Naive thymus-derived CD4-positive, alpha-beta T cell (primary cell): ENCODE measurements at regions of chr3 and their contacts with region 1.

Region 1: DNA sequence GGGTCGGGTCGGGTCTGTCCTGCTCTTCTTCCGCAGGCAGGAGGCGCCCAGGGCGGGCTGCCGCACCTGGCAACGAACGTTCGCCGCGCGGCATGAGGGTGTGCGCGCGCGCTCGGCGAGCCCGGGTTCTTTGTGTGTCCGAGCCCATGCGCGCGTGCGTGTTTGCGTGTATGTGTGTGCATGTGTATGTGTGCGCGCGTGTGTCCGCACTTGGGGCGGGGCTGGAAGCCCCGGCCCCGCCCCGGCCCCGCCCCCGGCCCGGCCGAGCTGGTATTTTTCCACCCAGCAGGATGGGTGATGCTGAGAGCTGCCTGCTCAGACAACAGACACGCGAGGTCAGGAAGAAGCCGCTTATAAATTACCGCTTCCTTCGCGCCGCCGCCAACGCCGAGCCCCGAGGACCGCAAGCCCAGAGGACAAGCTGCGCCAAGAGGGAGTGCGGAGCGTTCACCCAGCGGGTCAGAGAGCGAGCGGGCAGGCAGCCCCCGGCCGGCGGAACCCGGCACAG is at the start of gene SLC6A6:
- DNase-seq: peak; percentile 86 to 95 (median 92)
- ATAC-seq: peak; percentile 89
- H3K4me3 ChIP-seq: peak within 1 kb of the TSS; percentile 100
- H3K4me3 Mint-ChIP-seq: peak within 1 kb of the TSS; percentile 91 to 100 (median 98)
- H3K27ac ChIP-seq: peak within 1 kb of the TSS; percentile 83
- H3K27ac Mint-ChIP-seq: peak within 1 kb of the TSS; percentile 89 to 98 (median 96)
- H3K4me1 ChIP-seq: peaks cover 20 to 27% of the 10 kb centered on the region in 2 donors
- H3K4me1 Mint-ChIP-seq: peaks cover 33 to 50% (median 44%) of the 10 kb centered on the region in 7 donors
- H3K27me3 ChIP-seq: no peaks in the 10 kb centered on the region
- H3K27me3 Mint-ChIP-seq: peaks cover 0 to 1% (median 0%) of the 10 kb centered on the region in 5 donors
- total RNA-seq, gene SLC6A6: 34.5 to 87.5 (median 35.6) TPM

Region 2: GRCh38 chr3:14144423-14145075 is 257.8 kb before region 1 on chr3:
- CTCF ChIA-PET with region 1: no interaction called
- POLR2A ChIA-PET with region 1: no interaction called
- intact Hi-C with region 1: loop called (anchors 1 kb)
- DNase-seq: peak; percentile 45 to 93 (median 84)
- ATAC-seq: peak; percentile 75
- H3K4me3 ChIP-seq: peak overlapping the region; percentile 10
- H3K4me3 Mint-ChIP-seq: peak overlapping the region; percentile 53 to 76 (median 66)
- H3K27ac ChIP-seq: peak overlapping the region; percentile 79
- H3K27ac Mint-ChIP-seq: peak overlapping the region; percentile 89 to 100 (median 98)
- H3K4me1 ChIP-seq: peaks cover 50 to 52% of the 10 kb centered on the region in 2 donors
- H3K4me1 Mint-ChIP-seq: peaks cover 34 to 62% (median 56%) of the 10 kb centered on the region in 7 donors
- H3K27me3 ChIP-seq: no peaks in the 10 kb centered on the region
- H3K27me3 Mint-ChIP-seq: no peaks in the 10 kb centered on the region

Region 3: DNA sequence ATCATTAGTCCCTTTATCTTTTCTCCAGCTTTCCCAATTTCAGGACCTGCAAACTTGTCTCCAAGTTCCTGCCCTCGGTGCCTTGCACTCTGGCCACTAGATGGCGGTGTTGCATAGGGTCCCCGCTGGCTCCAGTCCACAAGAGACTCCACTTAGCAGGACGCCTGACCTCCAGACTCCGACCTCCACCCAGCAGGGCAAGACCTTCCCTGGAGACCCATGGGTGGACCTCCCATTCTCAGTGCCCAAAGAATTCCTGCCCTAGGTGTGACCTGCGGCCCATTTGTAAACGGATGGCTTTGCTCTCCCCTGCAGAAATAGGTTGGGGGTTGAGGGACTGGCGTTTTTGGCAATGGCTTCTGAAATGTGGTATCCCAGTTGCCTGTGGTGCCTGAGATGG is 141.1 kb before region 1 on chr3:
- CTCF ChIA-PET with region 1: interaction called, 4 read pairs
- POLR2A ChIA-PET with region 1: no interaction called
- intact Hi-C with region 1: loop called (anchors 1 kb)
- DNase-seq: peak; percentile 32 to 78 (median 62)
- ATAC-seq: peak; percentile 77
- H3K4me3 ChIP-seq: no peak overlapping the region
- H3K4me3 Mint-ChIP-seq: no peak overlapping the region
- H3K27ac ChIP-seq: no peak overlapping the region
- H3K27ac Mint-ChIP-seq: no peak overlapping the region
- H3K4me1 ChIP-seq: no peaks in the 10 kb centered on the region
- H3K4me1 Mint-ChIP-seq: no peaks in the 10 kb centered on the region
- H3K27me3 ChIP-seq: no peaks in the 10 kb centered on the region
- H3K27me3 Mint-ChIP-seq: peaks cover 0 to 14% (median 0%) of the 10 kb centered on the region in 5 donors

Region 4: DNA sequence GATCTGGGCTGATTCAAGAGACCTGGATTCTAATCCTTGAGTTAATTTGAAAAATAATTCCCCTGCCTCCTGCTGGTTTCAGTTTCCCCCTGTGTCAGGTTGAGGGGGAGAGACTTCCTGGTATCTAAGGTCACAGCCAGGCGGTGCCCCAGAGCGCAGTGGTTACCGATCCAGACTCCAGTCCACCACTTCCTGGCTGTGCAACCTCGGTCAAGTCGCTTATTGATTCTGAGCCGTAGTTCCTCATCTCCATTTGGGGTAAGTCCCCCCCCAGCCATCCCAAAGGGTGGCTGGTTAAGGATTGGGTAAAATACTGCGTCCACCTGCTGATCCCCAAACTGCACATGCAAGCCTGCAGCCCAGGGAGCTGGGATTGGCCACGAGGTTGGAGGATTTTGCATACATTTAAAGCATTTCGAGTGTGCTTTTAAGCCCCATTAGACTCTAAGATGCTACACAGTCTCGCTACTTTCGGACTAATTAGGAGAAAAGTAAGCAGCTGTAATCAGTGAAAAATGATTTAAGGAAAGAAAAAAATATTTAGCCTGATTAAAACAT is 23.8 kb after region 1 on chr3:
- CTCF ChIA-PET with region 1: interaction called, 10 read pairs
- POLR2A ChIA-PET with region 1: interaction called, 23 read pairs
- intact Hi-C with region 1: loop called in 1 of 2 experiments (anchors 1 kb)
- DNase-seq: peak in 7 of 9 donors; percentile 16 to 33 (median 29)
- ATAC-seq: peak; percentile 75
- H3K4me3 ChIP-seq: peak overlapping the region; percentile 24
- H3K4me3 Mint-ChIP-seq: peak overlapping the region; percentile 50 to 74 (median 69)
- H3K27ac ChIP-seq: peak overlapping the region; percentile 62
- H3K27ac Mint-ChIP-seq: peak overlapping the region; percentile 61 to 100 (median 87)
- H3K4me1 ChIP-seq: peaks cover 72 to 92% of the 10 kb centered on the region in 2 donors
- H3K4me1 Mint-ChIP-seq: peaks cover 76 to 89% (median 86%) of the 10 kb centered on the region in 7 donors
- H3K27me3 ChIP-seq: no peaks in the 10 kb centered on the region
- H3K27me3 Mint-ChIP-seq: no peaks in the 10 kb centered on the region

Region 5: DNA sequence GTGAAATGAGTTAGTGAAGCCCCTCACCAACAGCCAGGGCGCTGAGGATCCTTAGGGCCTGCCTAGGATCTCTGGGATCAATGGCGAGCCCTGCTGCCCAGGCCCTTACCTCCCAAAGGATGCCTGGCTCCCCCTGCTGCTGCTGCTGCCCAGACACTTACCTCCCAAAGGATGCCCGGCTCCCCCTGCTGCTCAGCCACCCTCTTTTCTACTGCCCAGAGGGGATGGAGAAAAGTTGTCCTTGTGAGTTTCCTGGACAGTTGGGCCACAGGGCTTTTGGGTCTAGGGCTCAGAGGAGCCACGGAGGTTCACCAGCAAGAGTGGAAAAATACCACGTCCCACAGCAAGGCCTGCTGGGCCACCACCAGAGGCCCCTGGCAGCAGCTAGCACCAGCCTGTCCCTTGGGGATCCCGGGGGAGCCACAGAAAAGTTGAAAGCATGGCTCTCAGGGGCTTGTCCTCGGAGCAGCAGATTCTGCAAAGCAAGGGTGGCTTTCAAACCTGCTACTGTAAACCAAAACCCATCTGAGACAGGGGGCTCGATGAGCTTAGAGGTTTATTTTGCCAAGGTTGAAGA is 59.5 kb after region 1 on chr3:
- CTCF ChIA-PET with region 1: interaction called, 19 read pairs
- POLR2A ChIA-PET with region 1: interaction called, 3 read pairs
- intact Hi-C with region 1: loop called (anchors 1 to 2 kb)
- DNase-seq: peak in 6 of 9 donors; percentile 22 to 41 (median 32)
- ATAC-seq: peak; percentile 60
- H3K4me3 ChIP-seq: no peak overlapping the region
- H3K4me3 Mint-ChIP-seq: no peak overlapping the region
- H3K27ac ChIP-seq: peak overlapping the region; percentile 5
- H3K27ac Mint-ChIP-seq: peak overlapping the region in 1 of 9 donors; percentile 10
- H3K4me1 ChIP-seq: no peaks in the 10 kb centered on the region
- H3K4me1 Mint-ChIP-seq: peaks cover 0 to 20% (median 5%) of the 10 kb centered on the region in 7 donors
- H3K27me3 ChIP-seq: no peaks in the 10 kb centered on the region
- H3K27me3 Mint-ChIP-seq: no peaks in the 10 kb centered on the region

Region 6: GRCh38 chr3:14651440-14652251 is 249.3 kb after region 1 on chr3 and contains the start of gene CCDC174:
- CTCF ChIA-PET with region 1: no interaction called
- POLR2A ChIA-PET with region 1: interaction called, 4 read pairs
- intact Hi-C with region 1: loop called (anchors 1 kb)
- DNase-seq: peak; percentile 84 to 98 (median 96)
- ATAC-seq: peak; percentile 99
- H3K4me3 ChIP-seq: peak within 1 kb of the TSS; percentile 90
- H3K4me3 Mint-ChIP-seq: peak within 1 kb of the TSS; percentile 84 to 100 (median 96)
- H3K27ac ChIP-seq: peak within 1 kb of the TSS; percentile 94
- H3K27ac Mint-ChIP-seq: peak within 1 kb of the TSS; percentile 92 to 100 (median 98)
- H3K4me1 ChIP-seq: peaks cover 21 to 25% of the 10 kb centered on the region in 2 donors
- H3K4me1 Mint-ChIP-seq: peaks cover 25 to 80% (median 66%) of the 10 kb centered on the region in 7 donors
- H3K27me3 ChIP-seq: no peaks in the 10 kb centered on the region
- H3K27me3 Mint-ChIP-seq: peaks cover 0 to 2% (median 0%) of the 10 kb centered on the region in 5 donors
- total RNA-seq, gene CCDC174: 21.6 to 59.2 (median 46.2) TPM